ENCODE measurements at regions of chr10 and their contacts with region 1.

Region 1: GRCh38 chr10:75852851-75853486 is 421.5 kb downstream of the LRMDA start:
- ATAC-seq: peak in 2 of 8 experiments; percentile 26 to 42
- H3K4me3 ChIP-seq: no peak overlapping the region
- H3K27ac ChIP-seq: no peak overlapping the region
- H3K4me1 ChIP-seq: peaks cover 14 to 21% of the 10 kb centered on the region in 2 donors

Region 2: GRCh38 chr10:77111611-77112550 is 1258.9 kb after region 1 on chr10:
- in situ Hi-C with region 1: loop called in 1 of 9 experiments (anchors 25 kb)
- ATAC-seq: peak; percentile 71 to 89 (median 80)
- H3K4me3 ChIP-seq: no peak overlapping the region
- H3K27ac ChIP-seq: no peak overlapping the region
- H3K4me1 ChIP-seq: peaks cover 9 to 18% of the 10 kb centered on the region in 2 donors

Measured in motor neuron (in vitro differentiated cells).